ENCODE measurements at regions of chr9 and their contacts with region 1.

Region 1: DNA sequence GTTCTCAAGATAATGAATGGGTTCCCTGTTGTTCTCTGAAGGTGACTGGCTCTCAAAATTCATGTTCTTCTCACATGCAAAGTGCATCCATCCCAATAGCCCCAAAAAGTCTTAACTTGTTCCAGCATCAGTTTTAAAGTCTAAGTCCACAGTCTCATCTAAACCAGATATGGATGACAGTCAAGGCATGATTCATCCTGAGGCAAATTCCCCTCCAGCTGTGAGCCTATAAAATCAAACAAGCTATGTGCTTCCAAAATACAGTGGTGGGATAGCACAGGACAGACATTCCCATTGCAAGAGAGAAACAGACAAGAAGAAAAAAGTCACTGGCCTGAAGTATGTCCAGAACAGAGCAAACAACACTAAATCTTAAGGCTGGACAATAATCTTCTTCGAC is 25.4 kb downstream of the FBXO10 start:
- DNase-seq: no peak
- ATAC-seq: no peak

Region 2: GRCh38 chr9:37753489-37754190 is 202.9 kb after region 1 on chr9 and contains the start of gene TRMT10B:
- intact Hi-C with region 1: loop called in 1 of 2 experiments (anchors 10 kb)
- DNase-seq: peak; percentile 54 to 73
- ATAC-seq: peak; percentile 95
- total RNA-seq, gene TRMT10B: 6.6 to 7.2 TPM

Region 3: GRCh38 chr9:37943329-37944265 is 392.8 kb after region 1 on chr9:
- intact Hi-C with region 1: no loop called
- DNase-seq: no peak
- ATAC-seq: no peak

Measured in left colon (tissue), 2 donors.